Ovary (tissue), 10 donors: ENCODE measurements at regions of chr13 and their contacts with region 1.

Region 1: DNA sequence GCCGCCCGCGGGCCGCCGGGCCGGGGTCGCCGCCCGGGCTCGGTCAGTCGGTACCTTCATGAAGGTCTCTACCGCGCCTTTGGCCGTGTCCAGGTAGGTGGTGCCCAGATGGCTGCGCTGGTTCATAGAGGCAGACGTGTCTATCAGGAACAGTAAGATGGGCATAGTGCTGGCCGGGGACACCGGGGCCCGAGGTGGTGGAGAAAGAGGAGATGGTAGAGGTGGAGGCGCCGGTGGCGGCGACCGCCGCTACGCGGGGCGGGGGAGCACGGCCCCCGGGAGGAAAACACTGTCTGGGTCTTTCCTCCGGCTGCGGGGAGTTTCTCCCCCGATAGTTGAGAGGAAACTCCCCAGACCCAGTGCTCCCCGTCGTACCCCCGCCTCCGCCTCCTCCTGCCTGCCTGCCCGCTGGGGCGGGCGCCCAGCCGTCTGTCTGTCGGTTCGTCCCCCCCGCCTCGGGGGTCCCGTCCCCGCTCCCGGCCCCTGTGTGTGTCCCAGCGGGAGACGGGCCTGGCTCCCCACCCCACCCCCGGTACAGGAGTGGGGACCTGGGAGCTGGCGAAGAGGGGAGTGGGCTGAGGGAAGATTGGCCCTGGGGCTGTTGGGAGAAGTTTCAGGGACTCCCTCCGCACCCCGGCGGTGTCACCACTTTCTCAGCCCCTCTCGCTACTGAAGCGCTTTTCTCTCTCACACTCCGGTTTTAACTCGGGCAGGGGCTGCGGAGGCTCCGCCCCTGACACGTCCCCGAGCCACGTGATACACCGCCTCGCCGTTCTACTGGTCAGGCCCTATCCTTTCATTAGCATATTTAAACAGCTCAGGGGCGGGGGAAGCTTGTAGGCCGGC is at the start of gene INTS6:
- DNase-seq: peak; percentile 99 to 100 (median 99)
- H3K4me3 ChIP-seq: peak within 1 kb of the TSS; percentile 79
- H3K27ac ChIP-seq: peak within 1 kb of the TSS; percentile 94 to 100
- H3K4me1 ChIP-seq: no peaks in the 10 kb centered on the region
- H3K27me3 ChIP-seq: no peaks in the 10 kb centered on the region
- CTCF ChIP-seq: no peak
- EP300 ChIP-seq: no peak
- POLR2A ChIP-seq: peak; percentile 97
- total RNA-seq, gene INTS6: 26.7 to 38.9 (median 31.0) TPM

Region 2: DNA sequence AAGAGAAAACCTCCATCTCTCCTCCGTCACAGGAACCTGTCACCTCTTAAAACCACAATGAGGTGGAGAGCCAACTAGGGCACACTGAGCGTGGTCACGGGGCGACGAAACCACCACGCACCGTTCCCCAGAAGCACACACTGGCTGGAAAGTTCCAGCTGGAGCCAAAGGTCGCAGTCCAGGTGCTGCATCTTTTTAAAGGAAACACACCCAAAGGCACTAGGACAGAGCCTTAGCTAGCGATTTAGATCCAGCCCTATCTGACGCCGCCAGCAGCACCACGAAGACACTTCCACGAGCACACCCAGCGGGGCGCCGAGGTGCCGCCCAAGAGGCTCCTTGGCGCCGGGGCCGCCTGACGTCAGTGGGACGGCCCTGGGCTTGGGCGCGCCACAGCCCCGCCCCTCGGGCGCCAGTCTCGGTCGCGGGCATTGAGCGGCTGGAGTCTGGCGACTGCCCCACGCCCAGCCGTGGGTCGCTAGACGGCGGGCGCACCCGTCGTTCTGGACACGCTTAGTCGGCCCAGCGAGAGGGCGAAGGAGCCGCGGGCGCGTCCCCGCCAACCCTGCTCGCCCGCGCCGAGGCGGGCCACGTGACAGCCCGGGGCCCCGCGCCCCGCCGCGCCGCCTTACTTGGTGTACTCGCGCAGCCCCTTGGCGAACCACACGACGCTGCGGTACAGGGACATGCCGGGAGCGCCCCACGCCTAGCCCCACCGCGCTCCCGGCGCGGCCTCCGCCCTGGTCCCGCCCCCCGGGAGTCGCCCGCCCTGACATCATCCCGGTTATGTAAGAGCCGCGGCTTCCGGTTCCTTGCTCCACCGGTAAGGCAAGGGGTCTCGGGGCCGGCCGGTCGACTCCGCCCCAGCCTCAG is 351.1 kb after region 1 on chr13 and contains the start of gene DHRS12:
- intact Hi-C with region 1: loop called in 3 of 4 experiments (anchors 1 to 10 kb)
- DNase-seq: peak; percentile 94 to 95 (median 94)
- H3K4me3 ChIP-seq: peak within 1 kb of the TSS; percentile 68
- H3K27ac ChIP-seq: peak within 1 kb of the TSS; percentile 100
- H3K4me1 ChIP-seq: peaks cover 22% of the 10 kb centered on the region
- H3K27me3 ChIP-seq: no peaks in the 10 kb centered on the region
- CTCF ChIP-seq: no peak
- EP300 ChIP-seq: peak; percentile 60
- POLR2A ChIP-seq: peak; percentile 85
- total RNA-seq, gene DHRS12: 9.7 to 19.7 (median 16.2) TPM